GM12878 (cell line): ENCODE measurements at regions of chr10 and their contacts with region 1.

Region 1: DNA sequence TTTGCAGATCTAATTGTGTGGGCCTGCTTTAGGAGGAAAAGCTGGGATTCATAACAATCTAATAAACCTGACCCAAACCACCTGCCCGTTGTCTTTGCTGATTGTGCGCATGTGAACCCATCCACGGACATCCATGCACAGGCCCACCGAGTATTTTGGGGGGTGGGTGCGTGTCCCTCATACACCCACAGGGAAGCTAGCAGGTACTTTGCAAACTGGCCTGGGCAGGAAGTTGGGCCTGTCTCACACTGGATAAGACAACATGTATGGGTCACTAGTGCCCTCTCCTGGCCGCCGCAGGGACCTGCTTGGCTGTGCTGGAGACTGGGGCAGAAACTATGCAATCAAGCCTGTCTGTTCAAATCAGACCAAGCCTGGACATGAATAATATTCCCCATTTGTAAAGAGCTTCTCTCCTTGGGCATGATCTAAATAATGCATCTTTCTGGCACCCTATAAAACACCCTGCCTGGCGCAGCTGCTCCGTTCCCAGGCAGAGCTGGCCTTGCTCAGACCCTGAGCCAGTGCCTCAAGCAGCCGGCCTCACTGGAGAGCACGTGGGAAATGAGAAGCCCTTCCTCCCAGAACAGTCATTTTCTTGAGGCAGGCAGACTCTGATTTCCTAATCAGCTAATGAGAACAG is 15.8 kb downstream of the ECHDC3 start:
- DNase-seq: peak; percentile 50
- ATAC-seq: peak; percentile 100
- H3K4me3 ChIP-seq: no peak overlapping the region
- H3K27ac ChIP-seq: peak overlapping the region; percentile 45
- H3K4me1 ChIP-seq: peaks cover 7% of the 10 kb centered on the region
- H3K27me3 ChIP-seq: no peaks in the 10 kb centered on the region
- CTCF ChIP-seq: peak; percentile 93 to 98 (median 96)
- EP300 ChIP-seq: no peak
- POLR2A ChIP-seq: no peak
- RAD21 ChIP-seq: peak; percentile 89

Region 2: DNA sequence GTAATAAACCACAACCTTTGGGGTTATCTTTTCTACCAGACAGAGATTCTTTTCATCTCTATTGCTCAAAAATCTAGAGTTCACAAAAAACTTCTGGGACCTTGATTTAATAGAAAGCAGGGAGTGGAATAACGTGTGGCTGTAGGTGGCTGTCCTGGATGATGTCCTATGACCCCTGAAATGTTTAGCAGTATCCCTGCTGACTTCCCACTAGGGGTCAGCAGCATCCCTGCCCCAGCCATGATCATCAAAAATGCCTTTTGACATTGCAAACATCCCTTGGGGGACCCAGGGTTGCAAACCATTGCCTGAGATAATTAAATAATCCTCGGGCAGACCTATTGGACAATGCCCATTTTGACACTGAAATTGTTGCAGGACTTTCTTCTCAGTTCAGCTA is 323.6 kb before region 1 on chr10:
- CTCF ChIA-PET with region 1: no interaction called
- POLR2A ChIA-PET with region 1: no interaction called
- RAD21 ChIA-PET with region 1: no interaction called
- SMC1A ChIA-PET with region 1: no interaction called
- in situ Hi-C with region 1: no loop called
- intact Hi-C with region 1: loop called (anchors 2 kb)
- DNase-seq: no peak
- ATAC-seq: peak; percentile 81
- H3K4me3 ChIP-seq: no peak overlapping the region
- H3K27ac ChIP-seq: no peak overlapping the region
- H3K4me1 ChIP-seq: no peaks in the 10 kb centered on the region
- H3K27me3 ChIP-seq: no peaks in the 10 kb centered on the region; a peak in 1 of 4 replicates
- CTCF ChIP-seq: peak; percentile 56 to 61 (median 61)
- EP300 ChIP-seq: no peak
- POLR2A ChIP-seq: no peak
- RAD21 ChIP-seq: peak; percentile 83

Region 3: DNA sequence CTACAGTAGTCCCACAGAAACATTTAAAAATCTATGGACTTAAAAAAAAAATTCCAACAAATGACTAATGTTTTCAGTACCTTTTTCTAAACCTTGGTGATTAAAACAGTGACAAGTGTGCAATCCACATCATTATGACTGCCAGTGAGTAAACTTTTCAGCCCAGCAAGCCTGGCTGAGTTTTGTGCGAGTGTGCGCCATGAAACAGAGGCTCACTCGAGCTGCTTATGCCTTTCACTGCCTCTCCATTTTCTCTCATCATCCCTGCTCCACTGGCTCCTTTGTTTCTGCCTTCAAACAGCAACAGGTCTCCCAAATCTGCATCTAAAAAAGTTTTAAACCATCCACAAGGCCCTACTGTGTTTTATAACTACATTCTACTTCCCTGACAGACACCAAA is 252.3 kb before region 1 on chr10:
- CTCF ChIA-PET with region 1: interaction called, 12 read pairs
- POLR2A ChIA-PET with region 1: no interaction called
- RAD21 ChIA-PET with region 1: interaction called, 4 read pairs
- SMC1A ChIA-PET with region 1: interaction called, 11 read pairs
- in situ Hi-C with region 1: loop called (anchors 5 kb)
- intact Hi-C with region 1: no loop called
- DNase-seq: no peak
- ATAC-seq: peak; percentile 72
- H3K4me3 ChIP-seq: no peak overlapping the region
- H3K27ac ChIP-seq: peak overlapping the region; percentile 13; the same call in 1 of the 2 replicates
- H3K4me1 ChIP-seq: no peaks in the 10 kb centered on the region
- H3K27me3 ChIP-seq: no peaks in the 10 kb centered on the region
- CTCF ChIP-seq: no peak
- EP300 ChIP-seq: no peak
- POLR2A ChIP-seq: no peak
- RAD21 ChIP-seq: no peak

Region 4: GRCh38 chr10:11515596-11516430 is 242.1 kb before region 1 on chr10:
- CTCF ChIA-PET with region 1: interaction called, 125 read pairs
- POLR2A ChIA-PET with region 1: no interaction called
- RAD21 ChIA-PET with region 1: interaction called, 56 read pairs
- SMC1A ChIA-PET with region 1: interaction called, 53 read pairs
- in situ Hi-C with region 1: loop called (anchors 5 kb)
- intact Hi-C with region 1: loop called (anchors 1 kb)
- DNase-seq: peak; percentile 67
- ATAC-seq: peak; percentile 86
- H3K4me3 ChIP-seq: peak overlapping the region; percentile 38; the same call in 1 of the 2 replicates
- H3K27ac ChIP-seq: peak overlapping the region; percentile 80
- H3K4me1 ChIP-seq: peaks cover 24% of the 10 kb centered on the region
- H3K27me3 ChIP-seq: no peaks in the 10 kb centered on the region
- CTCF ChIP-seq: peak; percentile 85 to 93 (median 88); a peak in 5 of 6 replicates
- EP300 ChIP-seq: no peak
- POLR2A ChIP-seq: no peak
- RAD21 ChIP-seq: peak; percentile 97

Region 5: DNA sequence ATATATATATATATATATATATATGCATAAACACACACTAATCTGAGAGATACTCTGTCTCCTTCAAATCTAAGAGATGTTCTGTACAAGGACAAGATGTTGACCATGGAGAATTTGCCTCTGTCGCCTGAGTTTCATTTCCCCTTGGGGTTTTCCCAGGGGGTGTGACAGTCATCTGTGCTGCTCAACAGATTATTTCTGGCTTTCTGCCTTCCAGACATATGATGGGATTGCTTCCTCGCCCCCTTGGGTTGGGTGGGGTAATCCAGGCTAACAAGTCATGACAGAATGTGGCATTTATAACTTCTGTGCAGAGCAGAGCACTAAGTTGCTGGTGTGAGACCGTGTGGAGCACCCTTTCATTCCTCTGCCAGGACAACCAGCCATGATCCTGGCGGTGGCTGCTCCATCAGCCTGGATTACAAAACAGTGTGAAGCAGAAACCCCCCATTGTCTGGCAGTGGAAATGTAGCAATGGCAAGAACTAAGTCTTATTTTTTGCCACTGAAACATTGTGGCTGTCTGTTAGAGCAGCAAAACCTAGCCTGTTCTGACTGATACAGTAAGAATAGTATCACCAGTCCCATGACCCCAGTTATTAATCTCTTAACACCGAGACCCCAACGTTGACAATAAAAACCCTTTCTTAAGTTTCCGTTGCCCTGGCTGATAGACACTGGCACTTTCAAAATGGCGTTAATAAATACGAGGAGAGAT is 132.8 kb before region 1 on chr10:
- CTCF ChIA-PET with region 1: no interaction called
- POLR2A ChIA-PET with region 1: no interaction called
- RAD21 ChIA-PET with region 1: no interaction called
- SMC1A ChIA-PET with region 1: no interaction called
- in situ Hi-C with region 1: no loop called
- intact Hi-C with region 1: no loop called
- DNase-seq: peak; percentile 56
- ATAC-seq: peak; percentile 93
- H3K4me3 ChIP-seq: 0 out of 2 replicates have a peak overlapping the region, but pooled peaks have one; percentile 41
- H3K27ac ChIP-seq: peak overlapping the region; percentile 32; the same call in 1 of the 2 replicates
- H3K4me1 ChIP-seq: peaks cover 20% of the 10 kb centered on the region
- H3K27me3 ChIP-seq: no peaks in the 10 kb centered on the region
- CTCF ChIP-seq: no peak
- EP300 ChIP-seq: no peak
- POLR2A ChIP-seq: no peak
- RAD21 ChIP-seq: no peak

Region 6: GRCh38 chr10:11698691-11699549 is 59.0 kb before region 1 on chr10:
- CTCF ChIA-PET with region 1: interaction called, 8 read pairs
- POLR2A ChIA-PET with region 1: no interaction called
- RAD21 ChIA-PET with region 1: interaction called, 4 read pairs
- SMC1A ChIA-PET with region 1: interaction called, 20 read pairs
- in situ Hi-C with region 1: no loop called
- intact Hi-C with region 1: loop called (anchors 1 kb)
- DNase-seq: peak; percentile 77
- ATAC-seq: peak; percentile 83
- H3K4me3 ChIP-seq: no peak overlapping the region
- H3K27ac ChIP-seq: peak overlapping the region; percentile 86
- H3K4me1 ChIP-seq: peaks cover 28% of the 10 kb centered on the region
- H3K27me3 ChIP-seq: no peaks in the 10 kb centered on the region
- CTCF ChIP-seq: no peak
- EP300 ChIP-seq: peak in 1 of 2 experiments; percentile 88; a peak in 2 of 4 replicates
- POLR2A ChIP-seq: no peak
- RAD21 ChIP-seq: 0 out of 2 replicates have a peak, but pooled peaks have one; percentile 5

Region 7: DNA sequence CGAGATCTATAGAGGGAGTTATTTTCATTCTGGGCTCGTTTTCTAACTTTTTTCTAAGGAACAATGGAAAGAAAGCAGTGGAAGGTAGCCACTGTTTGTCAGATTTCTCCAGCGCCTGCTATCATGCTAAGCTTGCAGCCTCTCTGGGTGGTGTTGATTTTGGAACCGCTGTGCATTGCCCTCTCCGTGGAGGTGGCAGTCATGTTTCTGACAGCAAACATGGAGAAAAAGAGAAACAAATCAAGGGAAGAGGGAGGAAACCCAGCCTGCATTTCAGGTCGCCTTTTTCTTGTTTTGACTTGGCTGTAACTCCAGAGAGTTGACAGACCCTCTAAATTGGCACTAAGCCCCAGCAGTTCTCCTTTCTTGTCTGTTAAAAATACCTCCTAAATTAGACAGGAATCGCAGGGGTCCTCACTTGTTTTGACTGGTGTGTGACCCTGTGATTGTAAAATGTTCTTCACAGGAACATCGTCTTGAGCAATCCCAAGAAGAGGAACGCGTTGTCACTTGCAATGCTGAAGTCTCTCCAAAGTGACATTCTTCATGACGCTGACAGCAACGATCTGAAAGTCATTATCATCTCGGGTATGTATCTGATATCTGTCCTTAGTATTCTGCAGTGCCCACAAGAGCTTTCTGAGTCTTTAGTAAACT is 10.9 kb before region 1 on chr10:
- CTCF ChIA-PET with region 1: interaction called, 10 read pairs
- POLR2A ChIA-PET with region 1: interaction called, 4 read pairs
- RAD21 ChIA-PET with region 1: interaction called, 4 read pairs
- SMC1A ChIA-PET with region 1: no interaction called
- in situ Hi-C with region 1: no loop called
- intact Hi-C with region 1: no loop called
- DNase-seq: no peak
- ATAC-seq: no peak
- H3K4me3 ChIP-seq: no peak overlapping the region
- H3K27ac ChIP-seq: no peak overlapping the region
- H3K4me1 ChIP-seq: no peaks in the 10 kb centered on the region; the same call in 1 of the 2 replicates
- H3K27me3 ChIP-seq: no peaks in the 10 kb centered on the region
- CTCF ChIP-seq: no peak
- EP300 ChIP-seq: no peak
- POLR2A ChIP-seq: no peak
- RAD21 ChIP-seq: no peak